ENCODE measurements at regions of chr15 and their contacts with region 1.

Region 1: DNA sequence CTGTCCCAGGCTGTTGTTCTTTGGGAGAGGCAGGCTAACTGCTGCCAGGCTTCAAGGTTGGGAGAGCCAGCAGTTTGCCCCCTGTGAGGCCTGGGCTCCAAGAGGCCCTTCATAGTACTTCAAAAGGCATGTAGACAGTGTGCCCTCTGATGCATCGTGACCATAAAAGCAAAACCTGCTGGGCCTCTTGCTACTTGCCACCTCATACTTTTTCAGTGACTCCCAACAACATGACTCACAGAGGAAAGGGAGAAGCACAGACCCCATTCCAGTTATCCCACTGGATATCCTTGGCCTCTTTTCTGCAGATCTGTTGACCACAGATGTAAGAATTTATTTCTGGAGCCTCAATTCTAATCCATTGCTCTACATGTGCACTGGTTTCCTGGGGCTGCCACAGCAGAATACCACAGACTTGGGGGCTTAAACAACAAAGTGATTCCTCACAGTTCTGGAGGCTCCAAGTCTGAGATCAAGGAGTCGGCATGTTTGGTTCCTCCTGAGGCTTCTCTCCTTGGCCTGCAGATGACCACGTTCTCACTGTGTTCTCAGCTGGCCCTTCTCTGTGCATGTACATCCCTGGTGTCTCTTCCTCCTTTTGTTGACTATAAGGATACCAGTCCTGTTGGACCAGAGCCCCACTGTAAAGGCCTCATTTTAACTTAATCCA is 8.9 kb upstream of the NSMCE3 start:
- H3K4me3 Mint-ChIP-seq: no peak overlapping the region
- H3K27ac Mint-ChIP-seq: no peak overlapping the region
- H3K4me1 Mint-ChIP-seq: no peaks in the 10 kb centered on the region
- H3K27me3 Mint-ChIP-seq: peaks cover 10% of the 10 kb centered on the region

Region 2: DNA sequence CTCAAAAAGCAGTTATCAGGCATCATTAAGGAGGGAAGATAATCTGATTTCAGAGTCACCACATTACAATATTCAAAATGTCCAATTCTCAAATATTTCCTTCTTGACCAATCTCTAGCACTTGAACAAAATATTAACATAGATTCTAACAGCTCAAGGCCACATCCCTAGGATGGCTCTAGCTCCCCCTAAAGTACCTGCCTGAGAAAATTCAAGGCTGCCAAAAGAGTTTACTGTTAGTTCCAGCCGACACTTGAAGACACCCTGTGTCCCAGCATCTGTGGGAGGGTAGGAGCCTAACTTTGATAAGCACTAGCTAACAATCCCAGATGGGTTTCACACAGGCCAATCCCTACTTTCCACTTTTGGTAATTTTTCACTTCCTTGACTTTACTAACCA is 19.3 kb before region 1 on chr15:
- intact Hi-C with region 1: loop called (anchors 2 kb)
- H3K4me3 Mint-ChIP-seq: no peak overlapping the region
- H3K27ac Mint-ChIP-seq: no peak overlapping the region
- H3K4me1 Mint-ChIP-seq: no peaks in the 10 kb centered on the region
- H3K27me3 Mint-ChIP-seq: peaks cover 2% of the 10 kb centered on the region